ENCODE measurements at regions of chr14 and their contacts with region 1.

Region 1: GRCh38 chr14:69611201-69612011 is at the start of gene SUSD6:
- DNase-seq: peak; percentile 95
- H3K4me3 ChIP-seq: peak within 1 kb of the TSS; percentile 78
- H3K27ac ChIP-seq: peak within 1 kb of the TSS; percentile 99
- H3K4me1 ChIP-seq: peaks cover 63% of the 10 kb centered on the region
- CTCF ChIP-seq: no peak
- total RNA-seq, gene SUSD6: 19.3 and 23.1 TPM in 2 replicates

Region 2: DNA sequence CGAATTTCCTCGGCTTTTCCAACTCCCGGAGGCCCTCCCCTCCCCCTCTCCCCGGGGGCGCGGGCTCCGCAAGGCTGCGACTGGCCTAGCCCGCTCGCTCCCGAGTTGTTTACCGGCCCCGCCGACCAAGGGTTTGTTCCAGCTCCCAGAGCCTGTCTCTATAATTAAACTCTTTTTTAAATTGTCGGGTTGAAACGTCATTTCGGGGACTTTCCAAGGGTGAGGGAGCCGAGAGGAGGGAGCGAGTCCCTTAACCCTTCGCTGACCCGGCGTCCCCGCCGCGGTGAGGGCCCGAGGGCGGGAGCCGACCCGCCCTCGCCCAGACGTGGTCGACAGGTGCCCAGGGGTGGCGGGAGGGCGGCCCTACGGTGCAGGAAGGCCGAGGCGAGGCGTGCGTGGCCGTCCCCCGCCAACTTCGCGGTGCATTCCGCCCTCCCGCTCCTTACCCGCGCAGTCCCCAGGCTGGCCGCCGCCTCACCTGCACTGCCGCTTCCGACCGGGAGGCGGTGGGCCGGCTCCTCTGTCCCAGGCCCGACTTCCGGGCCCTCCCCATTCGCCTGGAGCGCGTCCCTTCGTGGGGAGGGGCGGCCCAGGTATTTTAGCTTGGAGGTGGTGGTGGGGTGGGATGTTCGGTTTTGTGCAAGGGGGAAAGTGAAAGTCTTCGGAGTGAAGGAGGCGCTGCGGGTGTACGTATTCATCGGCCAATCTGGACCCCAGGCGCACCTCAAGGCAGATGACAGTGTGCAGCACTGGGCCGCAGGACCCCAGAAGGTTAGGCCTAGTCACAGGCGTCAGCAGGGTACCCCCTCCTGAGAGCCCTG is 815.6 kb before region 1 on chr14:
- CTCF ChIA-PET with region 1: no interaction called
- POLR2A ChIA-PET with region 1: no interaction called
- intact Hi-C with region 1: loop called (anchors 5 kb)
- DNase-seq: peak; percentile 90
- H3K4me3 ChIP-seq: peak overlapping the region; percentile 87
- H3K27ac ChIP-seq: peak overlapping the region; percentile 92
- H3K4me1 ChIP-seq: peaks cover 39% of the 10 kb centered on the region
- CTCF ChIP-seq: peak; percentile 71

Region 3: DNA sequence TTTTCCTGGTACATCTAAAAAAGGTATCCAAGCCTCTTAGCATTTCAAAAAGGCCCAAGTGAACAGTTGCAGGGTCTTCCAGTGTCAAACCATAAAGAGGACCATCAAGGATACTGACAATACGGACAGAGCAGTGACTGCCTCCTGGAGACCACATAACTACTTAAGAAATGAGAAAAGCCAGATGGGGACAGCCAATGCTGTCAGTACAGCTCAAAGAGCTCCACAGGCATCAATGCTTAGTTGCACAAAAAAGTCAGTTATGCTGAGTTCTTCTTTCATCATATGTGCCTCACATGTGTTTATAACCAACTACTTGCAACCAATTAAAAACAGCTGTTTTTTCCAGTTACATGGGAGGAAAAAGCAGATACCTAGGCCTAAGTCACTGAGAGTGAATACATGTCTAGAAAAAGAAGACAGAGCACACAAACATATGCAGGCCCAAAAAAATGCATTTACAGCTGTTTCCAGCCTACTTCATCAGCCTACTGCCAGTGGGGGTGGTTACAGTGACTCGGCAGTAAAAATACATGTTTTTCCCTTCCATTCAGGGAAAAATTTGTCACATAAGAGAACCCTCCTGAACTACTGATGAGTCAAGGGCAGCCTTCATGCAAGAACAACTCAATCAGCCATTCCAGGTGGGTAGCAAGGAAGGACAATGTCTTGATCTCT is 542.5 kb before region 1 on chr14:
- CTCF ChIA-PET with region 1: no interaction called
- POLR2A ChIA-PET with region 1: no interaction called
- intact Hi-C with region 1: no loop called
- DNase-seq: no peak
- H3K4me3 ChIP-seq: no peak overlapping the region
- H3K27ac ChIP-seq: no peak overlapping the region
- H3K4me1 ChIP-seq: no peaks in the 10 kb centered on the region
- CTCF ChIP-seq: no peak

Region 4: GRCh38 chr14:69629225-69630127 is 18.1 kb after region 1 on chr14:
- CTCF ChIA-PET with region 1: no interaction called
- POLR2A ChIA-PET with region 1: interaction called, 22 read pairs
- intact Hi-C with region 1: no loop called
- DNase-seq: peak; percentile 65
- H3K4me3 ChIP-seq: peak overlapping the region; percentile 57
- H3K27ac ChIP-seq: peak overlapping the region; percentile 65
- H3K4me1 ChIP-seq: peaks cover 100% of the 10 kb centered on the region
- CTCF ChIP-seq: no peak

Region 5: DNA sequence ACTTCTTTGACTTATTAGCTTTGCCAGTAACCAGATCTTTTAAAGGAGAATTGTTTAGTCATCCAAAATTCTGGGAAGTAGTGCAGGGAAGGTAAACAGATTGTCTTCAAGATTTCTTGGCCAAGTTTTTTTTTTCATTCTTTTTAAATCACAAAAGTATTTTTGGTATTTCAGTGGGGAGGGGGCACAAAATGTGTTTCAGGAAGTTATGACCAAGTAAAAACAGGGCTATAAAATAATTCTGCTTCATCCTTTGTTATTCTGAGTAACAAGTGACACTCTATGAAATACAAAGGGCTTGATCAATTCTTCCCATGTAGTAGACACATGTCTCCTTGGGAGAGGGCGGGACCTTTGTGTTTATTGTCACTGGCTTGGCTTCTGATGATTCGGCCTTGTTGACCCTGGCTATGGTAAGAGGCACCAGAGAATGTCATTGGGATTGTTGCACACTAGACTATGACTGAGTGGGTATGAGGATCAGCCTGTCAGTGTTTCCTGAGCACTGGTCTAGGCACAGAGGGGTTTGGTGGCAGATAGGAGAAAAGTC is 55.4 kb after region 1 on chr14:
- CTCF ChIA-PET with region 1: no interaction called
- POLR2A ChIA-PET with region 1: interaction called, 5 read pairs
- intact Hi-C with region 1: loop called (anchors 1 kb)
- DNase-seq: no peak
- H3K4me3 ChIP-seq: peak overlapping the region; percentile 58
- H3K27ac ChIP-seq: peak overlapping the region; percentile 80
- H3K4me1 ChIP-seq: peaks cover 96% of the 10 kb centered on the region
- CTCF ChIP-seq: no peak

Region 6: GRCh38 chr14:69708586-69709174 is 97.3 kb after region 1 on chr14:
- CTCF ChIA-PET with region 1: interaction called, 6 read pairs
- POLR2A ChIA-PET with region 1: interaction called, 7 read pairs
- intact Hi-C with region 1: loop called (anchors 2 kb)
- DNase-seq: peak; percentile 71
- H3K4me3 ChIP-seq: no peak overlapping the region
- H3K27ac ChIP-seq: peak overlapping the region; percentile 15
- H3K4me1 ChIP-seq: peaks cover 51% of the 10 kb centered on the region
- CTCF ChIP-seq: peak; percentile 76

Region 7: GRCh38 chr14:70640938-70641547 is 1029.6 kb after region 1 on chr14:
- CTCF ChIA-PET with region 1: no interaction called
- POLR2A ChIA-PET with region 1: no interaction called
- intact Hi-C with region 1: loop called (anchors 10 kb)
- DNase-seq: peak; percentile 85
- H3K4me3 ChIP-seq: peak overlapping the region; percentile 86
- H3K27ac ChIP-seq: peak overlapping the region; percentile 82
- H3K4me1 ChIP-seq: peaks cover 46% of the 10 kb centered on the region
- CTCF ChIP-seq: 0 out of 2 replicates have a peak, but pooled peaks have one; percentile 20

Region 8: DNA sequence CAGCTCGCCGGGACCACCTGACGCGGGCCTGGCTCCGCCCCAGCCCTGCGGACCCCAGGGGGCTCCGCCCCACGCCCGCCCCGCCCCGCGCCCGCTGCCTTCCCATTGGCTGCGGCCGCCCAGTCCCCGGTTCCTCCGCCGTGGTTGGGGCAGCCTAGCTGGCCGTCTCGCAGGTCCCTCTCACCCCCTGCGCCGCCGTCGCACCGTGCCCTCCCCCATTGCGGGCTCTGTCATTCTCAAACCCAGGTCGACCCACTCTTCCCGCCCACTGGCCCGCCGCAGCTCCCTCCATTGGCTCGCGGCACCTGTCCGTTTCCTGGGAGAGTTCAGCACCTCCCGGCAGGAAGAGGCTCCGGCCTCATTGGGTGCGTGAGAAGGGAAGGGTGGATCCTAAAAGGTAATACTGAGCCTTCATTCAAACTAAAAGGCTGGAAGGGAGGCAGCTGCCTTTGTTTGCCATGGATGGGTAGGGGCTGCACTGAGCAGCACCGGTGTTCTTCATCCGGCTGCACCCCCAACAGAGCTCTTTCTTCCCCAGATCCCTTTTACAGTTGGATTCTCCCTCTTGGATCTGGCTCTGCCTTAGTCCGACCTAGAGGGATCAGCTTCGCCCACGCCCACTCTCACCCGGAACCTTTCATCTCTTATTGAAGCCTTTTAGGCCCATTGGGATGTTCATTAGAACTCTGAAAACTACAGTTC is 1198.3 kb after region 1 on chr14:
- CTCF ChIA-PET with region 1: no interaction called
- POLR2A ChIA-PET with region 1: no interaction called
- intact Hi-C with region 1: loop called (anchors 10 kb)
- DNase-seq: peak; percentile 94
- H3K4me3 ChIP-seq: peak overlapping the region; percentile 77
- H3K27ac ChIP-seq: peak overlapping the region; percentile 28
- H3K4me1 ChIP-seq: peaks cover 35% of the 10 kb centered on the region
- CTCF ChIP-seq: no peak

Measured in OCI-LY7 (cell line).